Heart left ventricle (tissue), 16 donors: ENCODE measurements at regions of chr6 and their contacts with region 1.

Region 1: DNA sequence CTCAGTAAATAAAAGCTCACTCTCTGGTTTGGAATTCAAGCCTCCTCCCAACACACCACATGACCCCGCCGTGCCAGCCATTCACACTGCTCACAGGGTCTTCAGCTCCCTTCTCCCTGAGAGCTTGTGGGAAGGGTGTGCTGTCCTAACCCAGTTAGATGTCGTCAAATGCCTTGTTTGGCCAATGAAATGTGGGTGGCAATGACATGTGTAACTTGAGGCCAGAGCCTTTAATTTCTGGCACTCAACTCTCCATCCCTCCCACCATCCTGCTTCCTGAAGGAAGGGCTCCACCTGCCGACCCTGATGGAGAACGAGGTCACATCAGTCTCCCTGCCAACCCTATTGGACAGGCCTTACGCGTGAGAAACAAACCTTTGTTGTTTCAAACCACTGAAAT is 224.5 kb upstream of the AGPAT4 start:
- DNase-seq: peak in 3 of 5 donors; percentile 21 to 33 (median 23)
- ATAC-seq: peak; percentile 46 to 84 (median 70)
- H3K4me3 ChIP-seq: no peak overlapping the region
- H3K27ac ChIP-seq: no peak overlapping the region
- H3K4me1 ChIP-seq: peaks cover 0 to 8% (median 0%) of the 10 kb centered on the region in 12 donors
- H3K27me3 ChIP-seq: no peaks in the 10 kb centered on the region
- CTCF ChIP-seq: peak in 11 of 12 donors; percentile 10 to 46 (median 37)
- POLR2A ChIP-seq: no peak

Region 2: DNA sequence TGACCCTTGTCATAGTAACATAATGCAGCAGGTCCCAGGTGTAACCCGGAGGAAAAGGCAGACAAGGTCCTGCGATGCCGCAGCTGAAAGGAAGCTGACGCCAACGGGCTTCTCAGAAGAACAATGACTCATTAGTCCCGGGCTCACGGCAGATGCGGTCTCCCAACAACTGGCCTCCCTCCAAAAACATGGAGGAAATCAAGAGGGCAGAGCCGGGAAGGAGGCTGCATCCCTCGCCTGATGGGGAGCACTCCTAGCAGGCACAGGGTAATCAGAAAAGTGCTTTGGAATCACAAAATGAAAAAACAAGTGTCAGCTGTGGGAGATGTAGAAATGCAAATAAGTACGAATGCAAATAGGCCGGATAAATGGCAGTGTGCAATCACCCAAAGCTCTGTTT is 59.3 kb before region 1 on chr6:
- intact Hi-C with region 1: loop called in 1 of 10 experiments (anchors 5 kb)
- DNase-seq: peak in 4 of 5 donors; percentile 71 to 81 (median 76)
- ATAC-seq: peak; percentile 40 to 82 (median 68)
- H3K4me3 ChIP-seq: peak overlapping the region in 9 of 12 donors; percentile 22 to 52 (median 33)
- H3K27ac ChIP-seq: peak overlapping the region in 10 of 12 donors; percentile 3 to 72 (median 58)
- H3K4me1 ChIP-seq: peaks cover 0 to 45% (median 17%) of the 10 kb centered on the region in 12 donors
- H3K27me3 ChIP-seq: no peaks in the 10 kb centered on the region
- CTCF ChIP-seq: no peak
- POLR2A ChIP-seq: no peak

Region 3: DNA sequence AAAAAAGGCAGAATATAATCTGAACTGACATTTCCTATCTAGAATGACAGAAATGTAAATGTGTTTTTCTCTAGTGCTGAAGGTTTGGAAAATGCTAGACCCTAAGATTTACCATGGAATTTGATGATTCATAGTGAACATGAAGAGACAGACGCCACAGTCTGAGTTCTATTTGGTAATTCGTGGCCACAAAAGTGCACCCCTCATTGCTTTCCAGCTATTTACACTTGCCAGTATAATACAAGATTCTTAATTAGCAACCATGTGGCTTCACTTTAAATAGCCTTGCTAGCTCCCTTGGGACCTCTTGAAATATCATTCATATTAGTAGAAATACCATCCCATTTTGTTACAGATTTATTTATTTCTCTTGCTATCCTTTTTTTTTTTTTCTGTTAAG is 592.4 kb after region 1 on chr6:
- intact Hi-C with region 1: no loop called
- DNase-seq: no peak
- ATAC-seq: no peak
- H3K4me3 ChIP-seq: no peak overlapping the region
- H3K27ac ChIP-seq: no peak overlapping the region
- H3K4me1 ChIP-seq: peaks cover 0 to 18% (median 0%) of the 10 kb centered on the region in 12 donors
- H3K27me3 ChIP-seq: no peaks in the 10 kb centered on the region
- CTCF ChIP-seq: no peak
- POLR2A ChIP-seq: no peak